ENCODE measurements at regions of chr3 and their contacts with region 1.

Region 1: DNA sequence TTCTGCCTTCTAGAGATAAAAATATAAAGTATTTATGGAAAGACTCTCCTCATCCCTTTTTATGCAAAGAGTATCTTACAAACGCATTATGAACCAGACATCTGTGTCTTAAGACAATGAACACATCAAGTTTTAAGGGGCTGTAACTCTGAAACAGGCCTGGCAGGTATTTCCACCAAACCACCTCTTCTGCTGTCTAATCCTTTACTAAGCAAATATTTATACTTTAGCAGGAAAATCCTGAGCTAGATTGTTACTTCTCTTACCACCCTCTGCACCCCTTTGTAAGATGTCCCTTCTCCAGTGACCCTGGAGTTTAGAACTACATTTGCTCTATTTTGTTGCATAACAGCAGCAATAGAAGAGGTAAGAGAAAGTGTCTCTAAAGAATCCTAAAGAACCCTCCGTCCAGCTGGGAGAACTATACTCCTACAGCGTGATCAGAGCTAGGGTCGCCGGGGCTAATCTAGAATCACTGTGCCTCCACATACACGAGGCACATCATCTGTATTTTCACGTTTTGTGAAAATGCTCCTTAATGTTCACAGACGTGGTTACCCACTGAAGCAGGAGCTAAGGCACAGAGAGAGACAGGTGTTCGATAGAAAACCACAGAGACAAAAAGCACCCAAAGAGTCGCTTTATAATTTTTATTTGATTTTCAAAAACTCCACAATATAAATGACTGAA is 129.6 kb downstream of the FOXP1 start:
- DNase-seq: no peak
- H3K4me3 Mint-ChIP-seq: peak overlapping the region; percentile 61
- H3K27ac Mint-ChIP-seq: peak overlapping the region; percentile 40
- H3K4me1 Mint-ChIP-seq: peaks cover 68% of the 10 kb centered on the region
- H3K27me3 Mint-ChIP-seq: peaks cover 30% of the 10 kb centered on the region

Region 2: GRCh38 chr3:71468311-71469137 is 14.6 kb after region 1 on chr3:
- intact Hi-C with region 1: loop called (anchors 1 kb)
- DNase-seq: no peak
- H3K4me3 Mint-ChIP-seq: no peak overlapping the region
- H3K27ac Mint-ChIP-seq: no peak overlapping the region
- H3K4me1 Mint-ChIP-seq: no peaks in the 10 kb centered on the region
- H3K27me3 Mint-ChIP-seq: no peaks in the 10 kb centered on the region

Measured in activated T-helper 1 cell treated with anti-CD3 and anti-CD28 coated beads, Interleukin-12 subunit alpha, Interleukin-12 subunit beta, Interleukin-2, Interleukin-4 antibody, amounts not matched to agents 30 ng/mL and 10 ng/mL and 1 ng/mL, durations not matched to agents 14 hours and 24 hours and 36 hours (primary cell).